Endothelial cell of umbilical vein (primary cell): ENCODE measurements at regions of chr16 and their contacts with region 1.

Region 1: DNA sequence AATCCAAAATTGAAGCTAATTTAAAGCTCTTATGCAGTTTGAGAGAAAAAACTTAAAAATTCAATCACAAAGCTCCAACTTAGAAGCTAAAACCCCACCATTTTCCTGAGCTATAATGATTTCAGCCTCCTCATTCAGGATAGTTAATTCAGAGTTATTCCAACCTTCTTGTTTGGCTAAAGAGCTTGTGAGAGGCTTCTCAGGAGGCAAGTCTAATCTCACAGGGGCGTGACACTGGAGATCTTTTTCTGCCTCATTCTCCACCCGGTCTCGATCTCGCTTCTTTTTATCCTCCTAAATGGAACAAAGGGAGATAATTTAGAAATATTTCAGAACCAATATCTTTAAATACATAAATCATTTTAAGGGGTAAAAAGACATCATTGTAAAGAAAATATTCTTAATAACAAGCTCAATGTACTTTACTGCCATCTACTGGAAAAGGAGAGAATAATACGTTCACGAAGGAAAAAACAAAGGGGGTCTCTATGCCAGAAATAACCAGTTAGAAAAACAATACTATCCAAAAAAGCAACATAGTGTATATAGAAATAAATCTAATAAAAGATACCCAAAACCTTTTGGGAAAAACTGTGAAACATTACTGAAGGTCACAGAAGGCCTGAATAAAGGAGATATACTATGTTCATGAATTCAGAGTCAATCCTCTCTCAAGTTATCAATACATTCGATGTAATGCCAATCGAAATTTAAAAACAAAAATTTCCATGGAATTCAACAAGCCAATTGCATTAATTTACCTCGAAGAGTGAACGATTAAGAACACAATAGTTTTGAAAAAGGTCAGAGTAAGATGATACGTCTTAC is 13.9 kb downstream of the BRD7 start:
- DNase-seq: peak; percentile 33
- H3K4me3 ChIP-seq: no peak overlapping the region
- H3K27ac ChIP-seq: no peak overlapping the region
- H3K4me1 ChIP-seq: no peaks in the 10 kb centered on the region
- H3K27me3 ChIP-seq: no peaks in the 10 kb centered on the region
- CTCF ChIP-seq: peak; percentile 25 to 37
- POLR2A ChIP-seq: no peak

Region 2: DNA sequence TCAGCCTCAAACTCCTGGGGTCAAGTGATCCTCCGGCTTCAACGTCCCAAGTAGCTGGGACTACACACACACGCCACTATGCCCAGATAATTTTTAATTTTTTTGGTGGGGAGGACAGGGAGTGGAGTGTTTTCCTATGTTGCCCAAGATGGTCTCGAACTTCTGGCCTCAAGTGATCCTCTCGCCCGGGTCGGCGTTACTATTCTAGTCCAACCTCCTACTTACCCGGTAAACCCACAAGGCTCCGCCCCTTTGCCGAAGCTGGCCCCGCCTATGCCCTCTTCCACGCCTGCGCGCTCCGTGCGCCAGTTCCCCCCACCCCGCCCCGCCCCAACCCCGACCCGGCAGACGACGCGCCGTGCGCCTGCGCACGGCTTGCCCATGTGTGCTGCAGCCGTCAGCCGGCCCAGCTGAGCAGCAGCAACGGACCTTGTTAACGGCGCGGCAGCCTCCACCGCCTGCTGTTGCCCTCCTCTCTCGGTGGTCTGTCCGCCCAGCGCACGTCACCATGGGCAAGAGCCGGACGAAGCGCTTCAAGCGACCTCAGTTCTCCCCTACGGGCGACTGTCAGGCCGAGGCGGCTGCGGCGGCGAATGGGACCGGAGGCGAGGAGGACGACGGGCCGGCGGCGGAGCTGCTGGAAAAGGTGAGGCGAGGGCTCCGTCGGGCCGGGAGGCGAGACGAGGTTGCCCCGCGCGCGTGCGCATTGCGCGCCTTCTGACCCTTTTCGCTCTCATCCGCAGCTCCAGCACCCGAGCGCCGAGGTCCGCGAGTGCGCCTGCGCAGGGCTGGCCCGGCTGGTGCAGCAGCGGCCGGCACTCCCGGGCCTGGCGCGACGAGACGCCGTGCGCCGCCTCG is 289.0 kb before region 1 on chr16 and contains the start of gene HEATR3:
- CTCF ChIA-PET with region 1: interaction called, 57 read pairs
- POLR2A ChIA-PET with region 1: no interaction called
- dilution Hi-C with region 1: no loop called
- intact Hi-C with region 1: no loop called
- DNase-seq: peak; percentile 95
- H3K4me3 ChIP-seq: peak within 1 kb of the TSS; percentile 76 to 82 (median 76)
- H3K27ac ChIP-seq: peak within 1 kb of the TSS; percentile 67
- H3K4me1 ChIP-seq: peaks cover 27% of the 10 kb centered on the region
- H3K27me3 ChIP-seq: no peaks in the 10 kb centered on the region
- CTCF ChIP-seq: no peak
- POLR2A ChIP-seq: peak; percentile 39
- total RNA-seq, gene HEATR3: 17.0 and 23.1 TPM in 2 replicates

Region 3: GRCh38 chr16:50245417-50246298 is 109.2 kb before region 1 on chr16:
- CTCF ChIA-PET with region 1: interaction called, 14 read pairs
- POLR2A ChIA-PET with region 1: no interaction called
- dilution Hi-C with region 1: no loop called
- intact Hi-C with region 1: loop called (anchors 1 kb)
- DNase-seq: peak; percentile 16
- H3K4me3 ChIP-seq: peak overlapping the region; percentile 46 to 79 (median 64)
- H3K27ac ChIP-seq: no peak overlapping the region
- H3K4me1 ChIP-seq: peaks cover 9% of the 10 kb centered on the region
- H3K27me3 ChIP-seq: peaks cover 3% of the 10 kb centered on the region in 2 experiments
- CTCF ChIP-seq: peak in 1 of 2 donors; percentile 18
- POLR2A ChIP-seq: no peak

Region 4: DNA sequence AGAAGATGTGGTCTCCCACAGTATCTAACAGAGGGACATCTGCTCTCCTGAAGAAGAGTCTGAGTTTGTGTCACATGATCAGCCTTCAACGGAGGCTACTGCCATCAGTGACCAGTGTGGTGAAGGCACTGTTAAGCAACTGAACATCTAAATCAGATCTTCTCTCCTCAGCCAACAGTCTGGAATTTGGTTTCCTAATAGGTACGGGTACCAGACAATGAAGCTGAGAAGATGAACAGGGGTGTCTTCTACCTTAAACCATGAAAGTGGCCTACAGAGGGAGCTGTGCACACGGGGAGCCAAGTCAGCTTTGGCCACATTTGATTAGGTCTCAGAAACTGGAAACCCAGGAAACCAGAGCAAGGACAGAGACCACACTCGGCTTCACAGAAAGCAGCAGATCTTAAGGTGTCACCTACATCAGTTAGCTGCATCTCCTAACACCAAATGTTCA is 27.9 kb before region 1 on chr16:
- CTCF ChIA-PET with region 1: interaction called, 17 read pairs
- POLR2A ChIA-PET with region 1: no interaction called
- dilution Hi-C with region 1: no loop called
- intact Hi-C with region 1: loop called (anchors 2 kb)
- DNase-seq: no peak
- H3K4me3 ChIP-seq: no peak overlapping the region
- H3K27ac ChIP-seq: no peak overlapping the region
- H3K4me1 ChIP-seq: peaks cover 7% of the 10 kb centered on the region
- H3K27me3 ChIP-seq: no peaks in the 10 kb centered on the region
- CTCF ChIP-seq: peak; percentile 29 to 36
- POLR2A ChIP-seq: no peak

Region 5: GRCh38 chr16:50340578-50340977 is 14.3 kb before region 1 on chr16:
- CTCF ChIA-PET with region 1: interaction called, 11 read pairs
- POLR2A ChIA-PET with region 1: interaction called, 3 read pairs
- dilution Hi-C with region 1: no loop called
- intact Hi-C with region 1: no loop called
- DNase-seq: no peak
- H3K4me3 ChIP-seq: no peak overlapping the region
- H3K27ac ChIP-seq: no peak overlapping the region
- H3K4me1 ChIP-seq: no peaks in the 10 kb centered on the region
- H3K27me3 ChIP-seq: no peaks in the 10 kb centered on the region
- CTCF ChIP-seq: no peak
- POLR2A ChIP-seq: no peak

Region 6: GRCh38 chr16:50425648-50426047 is 70.8 kb after region 1 on chr16:
- CTCF ChIA-PET with region 1: no interaction called
- POLR2A ChIA-PET with region 1: no interaction called
- dilution Hi-C with region 1: no loop called
- intact Hi-C with region 1: no loop called
- DNase-seq: no peak
- H3K4me3 ChIP-seq: no peak overlapping the region
- H3K27ac ChIP-seq: no peak overlapping the region
- H3K4me1 ChIP-seq: no peaks in the 10 kb centered on the region
- H3K27me3 ChIP-seq: no peaks in the 10 kb centered on the region
- CTCF ChIP-seq: no peak
- POLR2A ChIP-seq: no peak

Region 7: GRCh38 chr16:50467943-50468760 is 113.3 kb after region 1 on chr16:
- CTCF ChIA-PET with region 1: no interaction called
- POLR2A ChIA-PET with region 1: no interaction called
- dilution Hi-C with region 1: no loop called
- intact Hi-C with region 1: no loop called
- DNase-seq: no peak
- H3K4me3 ChIP-seq: no peak overlapping the region
- H3K27ac ChIP-seq: no peak overlapping the region
- H3K4me1 ChIP-seq: no peaks in the 10 kb centered on the region
- H3K27me3 ChIP-seq: peaks cover 20 to 25% of the 10 kb centered on the region in 2 experiments
- CTCF ChIP-seq: no peak
- POLR2A ChIP-seq: no peak